AG04449 (cell line): ENCODE measurements at regions of chrX and their contacts with region 1.

Region 1: DNA sequence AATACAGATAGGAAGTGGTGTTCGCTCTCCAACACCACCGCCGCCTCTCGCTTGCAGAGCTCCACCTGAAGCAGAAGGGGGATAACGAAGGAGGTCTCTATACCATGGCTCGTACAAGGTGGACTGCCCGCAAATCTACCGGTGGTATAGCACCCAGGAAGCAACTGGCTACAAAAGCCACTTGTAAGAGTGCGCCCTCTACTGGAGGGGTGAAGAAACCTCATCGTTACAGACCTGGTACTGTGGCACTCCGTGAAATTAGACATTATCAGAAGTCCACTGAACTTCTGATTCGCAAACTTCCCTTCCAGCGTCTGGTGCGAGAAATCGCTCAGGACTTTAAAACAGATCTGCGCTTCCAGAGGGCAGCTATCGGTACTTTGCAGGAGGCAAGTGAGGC is 5.2 kb upstream of the BMP15 start:
- DNase-seq: no peak
- H3K4me3 ChIP-seq: no peak overlapping the region
- CTCF ChIP-seq: no peak

Region 2: GRCh38 chrX:50697691-50698090 is 207.6 kb before region 1 on chrX:
- CTCF ChIA-PET with region 1: interaction called, 20 read pairs
- POLR2A ChIA-PET with region 1: no interaction called
- DNase-seq: no peak
- H3K4me3 ChIP-seq: no peak overlapping the region
- CTCF ChIP-seq: no peak

Region 3: DNA sequence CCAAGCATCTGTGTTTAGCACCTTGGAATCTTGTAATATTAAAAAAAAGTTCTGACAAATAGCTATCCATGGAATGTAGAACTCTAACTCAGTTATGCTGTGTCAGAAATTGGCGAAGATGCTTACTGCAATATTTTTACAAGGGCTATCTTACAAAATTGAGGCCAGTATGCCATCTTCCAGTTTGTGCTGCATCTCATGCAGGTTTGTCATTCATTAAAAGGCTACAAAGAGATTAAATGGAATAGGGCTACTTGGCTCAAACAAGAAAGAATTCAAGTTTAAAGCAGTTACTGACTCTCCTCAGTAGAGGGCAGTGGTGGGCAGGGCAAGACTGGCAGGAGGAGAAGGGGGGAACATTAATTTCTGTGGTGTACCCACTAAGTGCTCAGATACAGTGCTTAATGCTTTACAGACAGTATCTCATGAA is 157.8 kb before region 1 on chrX:
- CTCF ChIA-PET with region 1: interaction called, 83 read pairs
- POLR2A ChIA-PET with region 1: no interaction called
- DNase-seq: peak; percentile 64
- H3K4me3 ChIP-seq: no peak overlapping the region
- CTCF ChIP-seq: peak; percentile 56

Region 4: DNA sequence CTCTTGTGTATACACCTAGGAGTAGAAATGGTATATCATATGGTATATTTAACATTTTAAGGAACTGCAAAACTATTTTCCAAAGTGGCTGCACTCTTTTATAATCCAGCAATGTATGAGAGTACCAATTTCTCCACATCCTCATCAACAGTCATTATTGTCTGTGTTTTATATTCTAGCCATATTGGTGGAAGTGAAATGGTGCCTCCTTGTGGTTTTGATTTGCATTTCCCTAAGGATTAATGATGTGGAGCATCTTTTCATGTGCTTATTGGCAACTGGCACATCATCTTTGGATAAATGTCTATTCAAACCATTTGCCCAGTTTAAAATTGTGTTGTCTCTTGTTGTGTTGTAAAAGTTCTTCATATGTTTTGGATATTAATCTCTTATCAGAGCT is 14.8 kb after region 1 on chrX:
- CTCF ChIA-PET with region 1: interaction called, 22 read pairs
- POLR2A ChIA-PET with region 1: no interaction called
- DNase-seq: no peak
- H3K4me3 ChIP-seq: no peak overlapping the region
- CTCF ChIP-seq: peak; percentile 19